ENCODE measurements at regions of chr1 and their contacts with region 1.

Region 1: DNA sequence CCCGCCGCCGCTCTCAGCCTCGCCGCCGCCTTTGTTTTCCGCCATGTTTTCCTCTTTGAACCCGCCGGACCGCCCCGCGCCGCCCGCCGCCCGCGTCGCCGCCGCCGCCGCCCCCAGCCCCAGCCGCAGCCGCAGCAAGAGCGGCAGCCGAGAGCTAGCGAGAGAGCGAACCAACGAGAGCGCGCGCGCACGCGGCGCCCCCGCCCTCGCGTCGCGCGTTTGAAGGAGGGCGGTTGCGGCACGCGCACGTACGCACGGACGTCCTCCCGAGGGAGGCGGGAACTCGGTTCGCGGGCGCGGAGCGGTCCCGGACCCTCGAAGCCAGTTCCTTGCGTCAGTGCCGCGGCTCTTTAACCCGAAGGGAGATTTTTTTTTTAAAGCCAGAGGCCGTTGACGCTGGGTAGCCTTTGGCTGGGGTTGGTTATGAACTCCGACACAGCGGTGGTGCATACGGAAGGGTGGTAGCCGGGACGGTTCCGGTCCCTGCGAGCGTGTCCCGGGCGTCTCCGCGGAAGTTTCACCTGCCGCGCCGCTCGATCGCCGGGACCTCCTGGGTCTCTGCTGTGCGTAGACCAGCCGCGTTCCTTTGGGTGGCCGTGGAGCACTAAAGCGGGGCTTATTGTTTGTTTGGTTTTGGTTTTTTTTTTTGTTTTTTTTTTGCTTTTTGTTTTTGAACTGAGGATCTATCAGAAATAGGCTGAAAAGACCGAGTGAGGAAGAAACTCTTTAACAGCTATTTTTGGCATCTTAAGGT is at the start of gene TRIM33:
- DNase-seq: peak; percentile 84 to 98 (median 90)
- ATAC-seq: peak; percentile 66
- H3K4me3 ChIP-seq: peak within 1 kb of the TSS; percentile 86
- H3K4me3 Mint-ChIP-seq: peak within 1 kb of the TSS; percentile 100
- H3K27ac ChIP-seq: peak within 1 kb of the TSS; percentile 95 to 99
- H3K27ac Mint-ChIP-seq: peak within 1 kb of the TSS; percentile 100
- H3K4me1 ChIP-seq: peaks cover 43% of the 10 kb centered on the region
- H3K4me1 Mint-ChIP-seq: peaks cover 48% of the 10 kb centered on the region
- H3K27me3 ChIP-seq: no peaks in the 10 kb centered on the region
- H3K27me3 Mint-ChIP-seq: no peaks in the 10 kb centered on the region
- CTCF ChIP-seq: no peak
- total RNA-seq, gene TRIM33: 42.6 to 45.0 TPM

Region 2: GRCh38 chr1:112955781-112956543 is 1555.2 kb before region 1 on chr1 and contains the start of gene SLC16A1:
- CTCF ChIA-PET with region 1: no interaction called
- POLR2A ChIA-PET with region 1: no interaction called
- intact Hi-C with region 1: loop called in 1 of 2 experiments (anchors 10 kb)
- DNase-seq: peak; percentile 78 to 95 (median 86)
- ATAC-seq: peak; percentile 74
- H3K4me3 ChIP-seq: peak within 1 kb of the TSS; percentile 86
- H3K4me3 Mint-ChIP-seq: peak within 1 kb of the TSS; percentile 98
- H3K27ac ChIP-seq: peak within 1 kb of the TSS; percentile 80 to 84
- H3K27ac Mint-ChIP-seq: peak within 1 kb of the TSS; percentile 76
- H3K4me1 ChIP-seq: peaks cover 35% of the 10 kb centered on the region
- H3K4me1 Mint-ChIP-seq: peaks cover 61% of the 10 kb centered on the region
- H3K27me3 ChIP-seq: no peaks in the 10 kb centered on the region
- H3K27me3 Mint-ChIP-seq: no peaks in the 10 kb centered on the region
- CTCF ChIP-seq: peak; percentile 14
- total RNA-seq, gene SLC16A1: 22.9 to 26.6 TPM

Region 3: DNA sequence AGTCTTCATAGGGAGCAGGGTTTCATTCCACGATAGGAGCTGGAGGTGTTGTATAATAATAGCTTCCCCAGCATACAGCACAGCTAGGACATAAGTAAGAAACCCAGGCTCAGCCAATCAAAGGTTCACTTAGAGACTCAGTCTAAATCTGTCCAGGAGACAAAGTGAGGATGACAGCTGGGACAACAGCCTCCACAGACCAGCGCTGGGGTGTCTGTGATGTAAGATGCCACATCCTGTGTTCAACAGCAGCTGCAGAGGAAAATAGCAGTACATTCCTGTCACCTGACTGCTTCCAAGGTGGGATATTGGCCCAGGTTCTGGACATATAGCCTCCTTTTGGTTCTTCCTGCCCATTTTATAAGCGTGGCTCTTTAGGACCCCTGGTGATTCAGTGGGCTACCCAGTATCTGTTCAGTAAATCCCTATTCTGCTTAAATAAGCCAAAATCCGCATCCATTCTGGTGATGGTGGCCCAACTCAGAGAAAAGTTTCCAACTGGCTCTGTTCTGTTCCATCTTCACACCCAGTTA is 180.7 kb before region 1 on chr1:
- CTCF ChIA-PET with region 1: no interaction called
- POLR2A ChIA-PET with region 1: interaction called, 10 read pairs
- intact Hi-C with region 1: no loop called
- DNase-seq: peak in 7 of 14 experiments; percentile 22 to 78 (median 44)
- ATAC-seq: peak; percentile 83
- H3K4me3 ChIP-seq: no peak overlapping the region
- H3K4me3 Mint-ChIP-seq: no peak overlapping the region
- H3K27ac ChIP-seq: no peak overlapping the region
- H3K27ac Mint-ChIP-seq: peak overlapping the region; percentile 61
- H3K4me1 ChIP-seq: peaks cover 57% of the 10 kb centered on the region
- H3K4me1 Mint-ChIP-seq: peaks cover 66% of the 10 kb centered on the region
- H3K27me3 ChIP-seq: no peaks in the 10 kb centered on the region
- H3K27me3 Mint-ChIP-seq: no peaks in the 10 kb centered on the region
- CTCF ChIP-seq: no peak

Region 4: DNA sequence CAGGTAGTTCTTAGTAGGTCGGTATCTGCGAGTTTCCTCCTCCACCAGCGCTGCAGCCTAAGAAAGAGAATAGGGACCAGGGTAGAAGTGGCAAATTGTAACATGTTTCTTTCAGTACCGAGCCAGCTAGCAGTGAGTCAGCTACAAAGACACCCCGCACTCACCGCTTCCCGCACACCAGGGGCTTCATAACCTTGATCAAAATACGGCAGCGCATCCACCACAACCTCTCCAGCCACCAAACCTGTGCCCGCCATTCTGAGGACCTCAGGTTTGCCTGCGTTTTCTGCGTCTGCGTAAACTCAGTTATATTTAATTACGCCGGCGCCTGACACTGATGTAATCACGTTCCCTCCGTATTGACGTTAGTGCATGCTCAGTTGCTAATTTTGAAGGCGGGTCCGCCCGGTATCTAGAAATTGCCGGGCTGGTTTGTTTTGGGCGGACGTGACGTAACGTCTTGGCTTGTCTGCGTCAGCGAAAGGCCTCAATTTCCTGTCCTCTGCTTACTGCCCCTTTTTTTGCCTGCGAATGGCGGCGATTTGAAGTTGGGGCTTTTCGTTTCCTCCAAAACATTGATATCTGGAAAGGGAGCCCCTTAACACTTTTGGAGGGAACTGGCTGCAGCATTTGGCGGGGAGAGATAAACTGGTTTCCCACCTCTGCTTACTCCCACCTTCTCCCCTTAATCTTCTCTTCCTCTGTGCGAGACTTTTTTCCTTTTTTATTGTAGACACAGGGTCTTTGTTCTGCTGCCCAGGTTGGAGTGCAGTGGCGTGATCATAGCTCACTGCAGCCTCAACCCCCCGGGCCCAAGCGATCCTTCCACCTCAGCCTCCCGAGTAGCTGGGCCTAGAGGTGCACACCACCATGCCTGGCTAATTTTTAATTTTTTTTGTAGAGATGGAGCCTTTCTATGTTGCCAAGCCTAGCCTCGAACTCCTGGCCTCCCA is 70.4 kb after region 1 on chr1 and contains the start of gene BCAS2:
- CTCF ChIA-PET with region 1: no interaction called
- POLR2A ChIA-PET with region 1: interaction called, 37 read pairs
- intact Hi-C with region 1: loop called (anchors 1 to 2 kb)
- DNase-seq: peak; percentile 88 to 99 (median 92)
- ATAC-seq: peak; percentile 92
- H3K4me3 ChIP-seq: peak within 1 kb of the TSS; percentile 86
- H3K4me3 Mint-ChIP-seq: peak within 1 kb of the TSS; percentile 95
- H3K27ac ChIP-seq: peak within 1 kb of the TSS; percentile 82 to 97
- H3K27ac Mint-ChIP-seq: peak within 1 kb of the TSS; percentile 97
- H3K4me1 ChIP-seq: peaks cover 26% of the 10 kb centered on the region
- H3K4me1 Mint-ChIP-seq: peaks cover 48% of the 10 kb centered on the region
- H3K27me3 ChIP-seq: no peaks in the 10 kb centered on the region
- H3K27me3 Mint-ChIP-seq: no peaks in the 10 kb centered on the region
- CTCF ChIP-seq: no peak
- total RNA-seq, gene BCAS2: 109 to 111 TPM

Region 5: DNA sequence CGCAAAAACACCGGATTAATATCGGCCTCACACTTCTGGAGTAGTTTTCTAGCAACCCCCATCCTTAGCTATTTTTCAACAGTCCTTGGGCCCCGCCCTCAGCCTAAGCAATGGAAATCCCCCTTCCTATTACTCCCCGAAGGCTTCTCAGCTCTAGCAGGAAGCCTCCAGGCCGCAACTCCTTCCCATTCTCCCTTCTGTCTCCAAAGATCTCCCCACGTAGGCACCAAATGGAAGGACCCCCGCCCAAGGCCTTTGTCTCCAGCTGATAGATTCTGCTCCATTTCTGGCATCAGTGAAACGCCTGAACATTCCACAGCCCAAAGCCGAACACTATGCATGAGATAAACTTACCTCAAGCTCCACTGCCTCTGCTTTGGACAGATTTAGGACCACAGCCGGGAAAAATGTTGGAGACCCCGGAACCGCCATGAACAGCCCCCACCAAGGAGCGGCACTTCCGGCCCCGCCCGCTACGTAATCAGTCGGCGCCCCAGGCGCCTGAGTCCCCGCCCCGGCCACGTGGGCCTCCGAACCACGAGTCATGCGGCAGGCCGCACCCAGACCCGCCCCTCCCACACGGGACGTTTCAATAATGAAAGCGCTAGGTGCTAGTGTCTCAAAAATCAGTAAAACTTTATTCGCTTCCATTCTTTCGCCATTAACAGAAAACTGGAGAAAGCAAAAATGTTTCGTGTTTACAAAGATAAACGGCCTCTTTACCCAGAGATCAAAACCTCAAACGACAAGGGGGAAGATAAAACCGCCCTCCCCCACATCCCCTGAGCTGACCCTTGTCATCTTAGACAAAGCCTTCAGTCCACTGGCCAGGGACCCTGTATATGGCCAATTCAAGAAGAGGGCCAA is 205.3 kb after region 1 on chr1 and contains the start of gene NRAS:
- CTCF ChIA-PET with region 1: no interaction called
- POLR2A ChIA-PET with region 1: interaction called, 11 read pairs
- intact Hi-C with region 1: loop called (anchors 2 to 5 kb)
- DNase-seq: peak; percentile 87 to 97 (median 94)
- ATAC-seq: peak; percentile 96
- H3K4me3 ChIP-seq: peak within 1 kb of the TSS; percentile 72
- H3K4me3 Mint-ChIP-seq: peak within 1 kb of the TSS; percentile 91
- H3K27ac ChIP-seq: peak within 1 kb of the TSS; percentile 83 to 96
- H3K27ac Mint-ChIP-seq: peak within 1 kb of the TSS; percentile 98
- H3K4me1 ChIP-seq: peaks cover 16% of the 10 kb centered on the region
- H3K4me1 Mint-ChIP-seq: peaks cover 21% of the 10 kb centered on the region
- H3K27me3 ChIP-seq: no peaks in the 10 kb centered on the region
- H3K27me3 Mint-ChIP-seq: no peaks in the 10 kb centered on the region
- CTCF ChIP-seq: no peak
- total RNA-seq, gene NRAS: 28.9 to 30.4 TPM

Region 6: GRCh38 chr1:115098979-115099692 is 587.9 kb after region 1 on chr1:
- CTCF ChIA-PET with region 1: no interaction called
- POLR2A ChIA-PET with region 1: interaction called, 9 read pairs
- intact Hi-C with region 1: loop called in 1 of 2 experiments (anchors 10 kb)
- DNase-seq: peak; percentile 50 to 95 (median 69)
- ATAC-seq: peak; percentile 90
- H3K4me3 ChIP-seq: peak overlapping the region; percentile 55
- H3K4me3 Mint-ChIP-seq: peak overlapping the region; percentile 89
- H3K27ac ChIP-seq: peak overlapping the region; percentile 90 to 91
- H3K27ac Mint-ChIP-seq: peak overlapping the region; percentile 93
- H3K4me1 ChIP-seq: peaks cover 27% of the 10 kb centered on the region
- H3K4me1 Mint-ChIP-seq: peaks cover 60% of the 10 kb centered on the region
- H3K27me3 ChIP-seq: no peaks in the 10 kb centered on the region
- H3K27me3 Mint-ChIP-seq: no peaks in the 10 kb centered on the region
- CTCF ChIP-seq: no peak